AG04450 (cell line): ENCODE measurements at regions of chr3 and their contacts with region 1.

Region 1: GRCh38 chr3:58640700-58641372 is 25.7 kb downstream of the FAM3D start:
- DNase-seq: peak; percentile 50
- H3K4me3 ChIP-seq: no peak overlapping the region
- H3K27ac ChIP-seq: no peak overlapping the region
- H3K27me3 ChIP-seq: no peaks in the 10 kb centered on the region
- CTCF ChIP-seq: peak; percentile 95

Region 2: GRCh38 chr3:57715686-57716085 is 925.1 kb before region 1 on chr3:
- CTCF ChIA-PET with region 1: no interaction called
- POLR2A ChIA-PET with region 1: no interaction called
- DNase-seq: no peak
- H3K4me3 ChIP-seq: no peak overlapping the region
- H3K27ac ChIP-seq: no peak overlapping the region
- H3K27me3 ChIP-seq: no peaks in the 10 kb centered on the region
- CTCF ChIP-seq: no peak

Region 3: GRCh38 chr3:58063022-58063815 is 577.6 kb before region 1 on chr3:
- CTCF ChIA-PET with region 1: no interaction called
- POLR2A ChIA-PET with region 1: no interaction called
- DNase-seq: no peak
- H3K4me3 ChIP-seq: no peak overlapping the region
- H3K27ac ChIP-seq: peak overlapping the region; percentile 25
- H3K27me3 ChIP-seq: no peaks in the 10 kb centered on the region
- CTCF ChIP-seq: no peak

Region 4: GRCh38 chr3:58433400-58434169 is 207.3 kb before region 1 on chr3 and contains the start of gene PDHB:
- CTCF ChIA-PET with region 1: no interaction called
- POLR2A ChIA-PET with region 1: no interaction called
- DNase-seq: peak; percentile 58
- H3K4me3 ChIP-seq: peak within 1 kb of the TSS; percentile 87
- H3K27ac ChIP-seq: peak within 1 kb of the TSS; percentile 71
- H3K27me3 ChIP-seq: no peaks in the 10 kb centered on the region
- CTCF ChIP-seq: no peak
- polyA plus RNA-seq, gene PDHB: 85.9 and 109 TPM in 2 replicates

Region 5: GRCh38 chr3:58560771-58561311 is 80.0 kb before region 1 on chr3:
- CTCF ChIA-PET with region 1: interaction called, 10 read pairs
- POLR2A ChIA-PET with region 1: no interaction called
- DNase-seq: peak; percentile 95
- H3K4me3 ChIP-seq: no peak overlapping the region
- H3K27ac ChIP-seq: peak overlapping the region; percentile 89
- H3K27me3 ChIP-seq: no peaks in the 10 kb centered on the region
- CTCF ChIP-seq: peak; percentile 73

Region 6: DNA sequence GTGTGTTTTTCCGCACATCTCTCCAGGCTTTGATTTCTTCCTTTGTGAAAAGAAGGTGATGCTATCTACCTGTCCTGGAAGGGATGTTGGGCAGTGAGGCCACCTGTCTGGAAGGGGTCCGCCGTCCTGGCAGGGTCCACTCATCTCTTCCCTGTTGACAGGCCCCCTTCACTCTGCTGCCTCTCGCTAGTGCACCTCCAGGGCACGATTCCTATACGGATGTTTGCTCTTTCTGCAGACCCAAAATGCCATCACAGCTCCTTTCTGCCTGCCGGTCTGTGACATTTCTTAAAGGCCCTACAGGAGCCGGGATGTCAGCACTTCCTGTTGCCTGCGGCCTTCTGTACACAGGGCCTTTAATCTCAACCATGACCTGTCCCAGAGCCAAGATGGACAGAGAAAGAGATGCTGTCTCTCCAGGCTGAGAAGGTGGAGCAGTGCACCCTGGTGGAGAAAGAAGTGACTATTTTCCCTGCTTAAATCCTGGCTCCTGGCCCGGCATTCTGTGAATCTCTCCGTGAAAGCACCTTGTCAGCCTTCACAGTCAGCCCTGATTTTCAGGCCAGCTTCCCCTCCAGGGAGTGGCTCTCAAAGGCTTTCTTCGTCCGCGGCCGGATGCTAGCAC is 18.3 kb after region 1 on chr3:
- CTCF ChIA-PET with region 1: interaction called, 25 read pairs
- POLR2A ChIA-PET with region 1: no interaction called
- DNase-seq: no peak
- H3K4me3 ChIP-seq: no peak overlapping the region
- H3K27ac ChIP-seq: no peak overlapping the region
- H3K27me3 ChIP-seq: peaks cover 10% of the 10 kb centered on the region
- CTCF ChIP-seq: peak; percentile 57

Region 7: GRCh38 chr3:58693929-58694850 is 53.4 kb after region 1 on chr3:
- CTCF ChIA-PET with region 1: no interaction called
- POLR2A ChIA-PET with region 1: no interaction called
- DNase-seq: no peak
- H3K4me3 ChIP-seq: no peak overlapping the region
- H3K27ac ChIP-seq: no peak overlapping the region
- H3K27me3 ChIP-seq: no peaks in the 10 kb centered on the region
- CTCF ChIP-seq: no peak